ENCODE measurements at regions of chr21 and their contacts with region 1.

Region 1: GRCh38 chr21:15592271-15592860 is 137.4 kb upstream of the USP25 start:
- DNase-seq: no peak
- H3K4me3 ChIP-seq: no peak overlapping the region
- H3K27ac ChIP-seq: no peak overlapping the region
- H3K4me1 ChIP-seq: no peaks in the 10 kb centered on the region
- H3K27me3 ChIP-seq: no peaks in the 10 kb centered on the region
- CTCF ChIP-seq: peak in 3 of 4 experiments; percentile 26 to 42 (median 42)
- EP300 ChIP-seq: no peak
- POLR2A ChIP-seq: no peak

Region 2: DNA sequence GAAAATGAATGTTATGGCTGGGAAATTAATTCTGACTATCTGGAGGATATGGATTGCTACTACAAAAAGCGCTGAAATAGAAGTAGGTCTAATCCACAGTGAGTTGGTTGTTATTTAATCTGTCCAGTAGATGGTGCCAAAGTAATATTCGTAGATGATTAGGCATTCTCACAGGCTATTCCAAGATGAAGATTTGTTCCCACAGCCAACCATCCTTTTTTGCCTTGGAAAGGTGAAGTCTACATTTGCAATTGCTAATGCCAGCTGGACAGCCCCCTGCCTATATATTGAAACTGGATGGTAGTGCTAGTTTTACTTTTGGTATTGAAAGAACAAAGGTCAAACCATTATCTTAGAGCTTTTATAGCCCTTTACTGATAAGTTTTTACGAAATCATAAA is 1332.6 kb before region 1 on chr21:
- intact Hi-C with region 1: loop called (anchors 10 kb)
- DNase-seq: no peak
- H3K4me3 ChIP-seq: no peak overlapping the region
- H3K27ac ChIP-seq: no peak overlapping the region
- H3K4me1 ChIP-seq: no peaks in the 10 kb centered on the region
- H3K27me3 ChIP-seq: no peaks in the 10 kb centered on the region
- CTCF ChIP-seq: peak in 3 of 4 experiments; percentile 25 to 60 (median 58)
- EP300 ChIP-seq: no peak
- POLR2A ChIP-seq: no peak

Region 3: DNA sequence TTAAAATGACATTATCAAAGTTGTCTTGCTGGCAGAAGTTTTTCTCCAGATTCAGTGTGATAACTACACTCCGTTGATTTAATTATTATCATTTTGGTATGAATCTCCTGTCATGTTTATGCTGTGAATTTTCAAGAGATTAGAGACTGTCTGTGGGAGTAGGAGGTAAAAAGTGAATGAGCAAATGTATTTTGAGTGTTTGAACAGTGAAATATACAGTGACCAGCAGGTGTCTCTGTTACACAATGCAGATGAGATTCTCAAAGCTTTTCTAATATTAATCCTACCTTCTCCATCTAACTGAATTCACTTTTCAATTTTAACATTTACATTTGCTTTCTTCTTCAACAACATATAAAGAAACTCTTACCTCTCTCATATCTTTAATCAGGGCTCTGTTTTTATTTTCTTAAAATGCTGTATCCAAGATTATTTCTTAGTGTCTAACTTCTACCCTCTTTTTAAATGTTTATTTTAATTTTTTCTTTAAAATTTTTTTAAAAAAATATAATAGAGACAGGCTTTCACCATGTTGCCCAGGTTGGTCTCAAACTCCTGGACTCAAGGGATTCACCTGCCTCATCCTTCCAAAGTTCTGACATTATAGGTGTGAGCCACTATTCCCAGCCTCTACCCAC is 1188.6 kb before region 1 on chr21:
- intact Hi-C with region 1: loop called (anchors 10 kb)
- DNase-seq: no peak
- H3K4me3 ChIP-seq: no peak overlapping the region
- H3K27ac ChIP-seq: no peak overlapping the region
- H3K4me1 ChIP-seq: no peaks in the 10 kb centered on the region
- H3K27me3 ChIP-seq: no peaks in the 10 kb centered on the region
- CTCF ChIP-seq: peak; percentile 19 to 50 (median 32)
- EP300 ChIP-seq: no peak
- POLR2A ChIP-seq: no peak

Region 4: DNA sequence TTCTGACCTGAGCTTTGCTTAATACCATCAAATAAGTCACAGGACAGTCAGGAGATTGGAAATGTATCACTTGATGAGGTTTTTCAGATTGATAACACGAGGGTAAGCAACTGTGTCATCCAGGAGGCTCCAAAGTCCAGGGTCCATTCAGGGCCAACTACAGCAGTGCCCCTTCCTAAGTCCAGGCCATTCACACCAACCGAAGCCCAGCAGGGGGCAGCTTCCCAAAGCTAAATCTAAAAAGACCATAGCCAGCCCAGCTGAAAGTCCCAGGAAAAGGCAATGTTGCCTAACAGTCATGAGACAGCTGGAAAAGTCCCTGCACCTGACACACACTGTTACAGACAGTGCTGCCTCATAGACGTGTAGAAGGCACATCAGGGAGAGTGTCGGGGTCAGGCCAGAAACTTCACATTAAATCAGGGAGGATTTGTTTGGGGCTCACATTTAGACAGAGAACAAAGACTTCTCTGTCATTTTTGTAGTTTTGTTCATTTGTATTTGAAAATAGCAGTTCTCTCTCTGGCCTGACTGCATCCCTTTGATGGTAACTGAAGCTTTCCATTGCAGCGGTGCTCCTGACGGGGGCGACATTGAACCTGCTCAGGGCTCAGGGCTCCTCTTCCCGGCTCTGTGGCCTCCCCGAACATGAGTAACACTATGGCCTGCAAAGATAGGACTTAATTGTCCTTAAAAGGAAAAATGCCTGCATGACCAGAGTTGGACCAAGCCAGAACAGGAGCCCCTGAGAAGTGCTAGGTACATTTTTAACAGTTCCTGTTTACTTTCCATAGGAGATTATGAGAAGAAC is 728.0 kb before region 1 on chr21:
- intact Hi-C with region 1: loop called (anchors 10 kb)
- DNase-seq: peak; percentile 89
- H3K4me3 ChIP-seq: no peak overlapping the region
- H3K27ac ChIP-seq: peak overlapping the region; percentile 7 to 59 (median 34)
- H3K4me1 ChIP-seq: peaks cover 0 to 40% (median 19%) of the 10 kb centered on the region in 4 donors
- H3K27me3 ChIP-seq: no peaks in the 10 kb centered on the region
- CTCF ChIP-seq: peak; percentile 11 to 54 (median 40)
- EP300 ChIP-seq: no peak
- POLR2A ChIP-seq: no peak

Measured in sigmoid colon (tissue), 7 donors.